ENCODE measurements at regions of chr15 and their contacts with region 1.

Region 1: GRCh38 chr15:60006203-60006862 is 2.2 kb downstream of the FOXB1 start:
- DNase-seq: peak; percentile 94
- H3K4me3 Mint-ChIP-seq: peak overlapping the region; percentile 93
- H3K27ac Mint-ChIP-seq: peak overlapping the region; percentile 96
- H3K4me1 Mint-ChIP-seq: peaks cover 53% of the 10 kb centered on the region
- H3K27me3 Mint-ChIP-seq: peaks cover 84% of the 10 kb centered on the region

Region 2: GRCh38 chr15:58064980-58065444 is 1941.3 kb before region 1 on chr15:
- intact Hi-C with region 1: loop called (anchors 5 kb)
- DNase-seq: peak; percentile 59
- H3K4me3 Mint-ChIP-seq: no peak overlapping the region
- H3K27ac Mint-ChIP-seq: no peak overlapping the region
- H3K4me1 Mint-ChIP-seq: peaks cover 4% of the 10 kb centered on the region
- H3K27me3 Mint-ChIP-seq: peaks cover 71% of the 10 kb centered on the region

Region 3: DNA sequence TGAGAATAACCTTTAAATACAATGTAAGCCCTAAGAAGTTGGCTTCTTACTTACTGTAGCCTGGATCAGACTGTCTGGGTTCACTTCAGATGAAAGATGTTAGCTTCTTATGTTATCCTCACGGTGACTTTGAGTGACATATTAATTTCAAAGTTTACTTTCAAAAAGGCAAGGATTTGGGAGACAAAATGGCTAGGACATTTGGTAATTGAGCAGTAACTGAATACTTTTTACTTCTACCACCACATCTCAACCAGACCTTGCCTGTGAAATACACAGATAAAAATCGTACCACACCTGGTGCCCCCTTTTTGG is 281.2 kb before region 1 on chr15:
- intact Hi-C with region 1: loop called (anchors 10 kb)
- DNase-seq: no peak
- H3K4me3 Mint-ChIP-seq: no peak overlapping the region
- H3K27ac Mint-ChIP-seq: no peak overlapping the region
- H3K4me1 Mint-ChIP-seq: peaks cover 2% of the 10 kb centered on the region
- H3K27me3 Mint-ChIP-seq: peaks cover 23% of the 10 kb centered on the region

Region 4: DNA sequence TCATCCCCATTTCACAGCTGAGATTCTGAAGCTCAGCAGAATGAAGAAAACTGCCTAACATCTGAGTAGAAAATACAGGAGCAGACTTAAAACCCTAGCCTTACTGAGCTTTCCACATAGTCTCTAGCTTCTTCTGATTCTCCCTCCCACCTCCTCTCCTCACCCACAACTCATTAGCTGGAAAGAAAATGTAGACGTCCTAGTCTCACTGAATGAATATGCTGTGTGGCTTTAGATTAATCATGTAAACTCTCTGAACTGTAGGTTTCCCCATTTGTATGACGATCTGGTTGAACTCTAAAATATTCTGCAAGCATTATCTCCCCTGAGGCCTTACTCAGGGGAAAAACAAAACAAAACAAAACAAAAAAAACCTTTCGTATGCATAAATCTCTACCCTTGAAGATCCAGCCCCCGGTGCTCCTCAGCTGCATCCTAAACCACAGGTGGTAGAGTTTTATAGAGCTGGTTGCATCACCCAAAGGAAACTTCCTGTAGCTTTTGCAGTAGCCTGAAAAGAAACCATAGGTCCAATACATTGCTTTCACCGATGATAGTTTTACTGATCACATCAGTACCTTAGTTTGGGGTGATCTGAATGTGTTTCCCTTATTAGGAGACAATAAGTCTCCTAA is 38.4 kb after region 1 on chr15:
- intact Hi-C with region 1: loop called (anchors 1 kb)
- DNase-seq: peak; percentile 82
- H3K4me3 Mint-ChIP-seq: peak overlapping the region; percentile 54
- H3K27ac Mint-ChIP-seq: peak overlapping the region; percentile 78
- H3K4me1 Mint-ChIP-seq: peaks cover 20% of the 10 kb centered on the region
- H3K27me3 Mint-ChIP-seq: peaks cover 23% of the 10 kb centered on the region

Region 5: DNA sequence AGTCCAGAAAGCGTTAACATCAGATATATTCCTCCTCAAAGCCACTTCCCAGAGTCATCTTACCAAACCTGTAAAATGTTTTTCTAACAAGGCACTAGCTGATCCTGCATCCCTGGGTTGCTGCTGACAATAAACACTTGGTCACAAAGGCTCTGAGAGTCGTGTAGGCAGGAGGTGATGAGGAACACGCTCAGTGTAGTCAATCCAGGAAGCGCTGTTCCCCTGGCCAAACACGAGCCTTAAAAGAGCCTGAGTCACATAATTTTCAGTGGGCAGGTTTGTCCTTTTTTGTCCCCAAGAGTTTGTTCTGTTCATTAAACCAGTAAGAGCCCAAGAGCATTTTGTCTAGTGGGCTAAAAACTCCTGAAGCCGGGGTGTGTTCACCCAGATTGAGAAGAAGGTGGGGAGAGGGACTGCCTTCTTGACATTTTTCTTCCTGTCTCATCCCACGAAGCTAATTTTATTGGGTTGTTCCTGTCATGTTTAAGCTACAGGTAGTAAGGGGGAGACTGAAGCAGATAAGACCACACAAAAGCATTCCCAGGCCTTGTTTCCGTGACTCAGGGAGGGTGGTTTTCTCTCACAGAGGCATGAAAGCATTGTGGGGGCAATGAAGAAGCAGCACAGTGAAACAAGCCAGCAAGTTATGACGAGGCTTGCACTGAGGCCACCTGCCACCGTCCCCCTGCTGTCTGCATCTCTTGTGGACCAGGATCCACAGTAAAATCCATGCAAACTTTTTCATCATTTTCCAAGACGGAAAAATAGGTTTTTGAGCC is 71.4 kb after region 1 on chr15:
- intact Hi-C with region 1: loop called (anchors 2 kb)
- DNase-seq: peak; percentile 64
- H3K4me3 Mint-ChIP-seq: no peak overlapping the region
- H3K27ac Mint-ChIP-seq: peak overlapping the region; percentile 61
- H3K4me1 Mint-ChIP-seq: peaks cover 39% of the 10 kb centered on the region
- H3K27me3 Mint-ChIP-seq: peaks cover 8% of the 10 kb centered on the region

Region 6: DNA sequence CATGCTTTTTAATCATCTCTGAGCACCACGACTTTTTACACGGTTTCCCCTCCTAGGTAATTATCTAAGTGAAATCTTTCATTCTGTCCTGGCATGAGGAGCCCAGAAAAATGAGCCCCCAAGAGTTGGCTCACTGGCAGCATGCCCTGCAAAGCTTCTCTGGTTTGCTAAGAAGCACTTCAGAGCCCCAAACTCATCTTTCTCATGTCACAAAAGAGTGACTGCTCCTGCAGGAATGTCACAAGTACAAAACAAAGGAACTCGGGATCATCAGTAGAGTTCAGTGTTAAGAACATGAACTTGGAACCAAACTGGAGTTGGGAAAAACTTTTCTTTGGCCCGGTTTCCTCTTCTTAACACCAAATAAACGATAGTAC is 121.7 kb after region 1 on chr15:
- intact Hi-C with region 1: loop called (anchors 2 kb)
- DNase-seq: no peak
- H3K4me3 Mint-ChIP-seq: peak overlapping the region; percentile 86
- H3K27ac Mint-ChIP-seq: peak overlapping the region; percentile 84
- H3K4me1 Mint-ChIP-seq: peaks cover 51% of the 10 kb centered on the region
- H3K27me3 Mint-ChIP-seq: peaks cover 12% of the 10 kb centered on the region

Region 7: DNA sequence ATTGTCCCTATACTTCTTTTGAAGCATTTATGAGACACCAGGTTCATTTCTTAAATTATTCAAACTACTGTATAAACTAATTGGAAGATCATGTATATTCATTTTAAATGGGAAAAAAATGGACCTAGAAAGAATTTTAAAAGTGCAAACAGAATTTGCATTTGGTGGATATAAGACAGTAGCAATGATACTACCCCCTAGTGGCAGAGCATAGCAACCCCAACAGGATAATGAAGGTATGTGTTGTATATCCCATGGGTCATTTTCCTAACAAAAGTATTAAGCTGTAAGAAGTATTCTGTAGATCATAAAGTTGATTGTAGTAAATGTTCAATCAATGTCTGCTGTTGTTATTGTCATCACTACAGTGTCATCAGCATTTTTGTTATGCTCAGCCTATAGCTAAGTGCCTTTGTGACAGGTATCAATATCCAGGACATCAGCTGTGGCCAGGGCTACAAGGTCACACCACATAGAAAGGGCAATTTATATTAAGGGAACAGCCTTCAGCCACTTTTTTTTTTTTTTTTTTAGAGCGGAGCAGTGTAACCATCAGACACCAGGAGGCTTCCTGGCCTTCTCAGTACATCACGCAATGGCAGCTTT is 173.6 kb after region 1 on chr15:
- intact Hi-C with region 1: loop called (anchors 2 kb)
- DNase-seq: peak; percentile 77
- H3K4me3 Mint-ChIP-seq: no peak overlapping the region
- H3K27ac Mint-ChIP-seq: no peak overlapping the region
- H3K4me1 Mint-ChIP-seq: no peaks in the 10 kb centered on the region
- H3K27me3 Mint-ChIP-seq: peaks cover 33% of the 10 kb centered on the region

Measured in activated CD4-positive, alpha-beta T cell treated with anti-CD3 and anti-CD28 coated beads, Interleukin-2, amount 10 ng/mL, durations not matched to agents 24 days and 14 days (primary cell).